ENCODE measurements at regions of chr2 and their contacts with region 1.

Region 1: GRCh38 chr2:10434886-10435819 is 13.0 kb downstream of the ODC1 start:
- DNase-seq: peak in 1 of 2 experiments; percentile 93
- H3K4me3 ChIP-seq: no peak overlapping the region
- H3K27ac ChIP-seq: no peak overlapping the region
- H3K4me1 ChIP-seq: peaks cover 0 to 3% (median 1%) of the 10 kb centered on the region in 4 experiments; a peak in 3 of 7 replicates
- H3K27me3 ChIP-seq: peaks cover 0 to 8% (median 3%) of the 10 kb centered on the region in 4 experiments; a peak in 3 of 7 replicates
- CTCF ChIP-seq: peak in 2 of 3 experiments; percentile 88 to 96; a peak in 3 of 4 replicates
- EP300 ChIP-seq: no peak
- POLR2A ChIP-seq: no peak
- RAD21 ChIP-seq: peak; percentile 99

Region 2: GRCh38 chr2:10122386-10123280 is 312.5 kb before region 1 on chr2 and contains the start of gene RRM2:
- CTCF ChIA-PET with region 1: interaction called, 26 read pairs
- POLR2A ChIA-PET with region 1: interaction called, 8 read pairs
- DNase-seq: peak; percentile 71 to 96
- H3K4me3 ChIP-seq: peak within 1 kb of the TSS; percentile 85 to 96 (median 88)
- H3K27ac ChIP-seq: peak within 1 kb of the TSS; percentile 85
- H3K4me1 ChIP-seq: peaks cover 1 to 4% (median 4%) of the 10 kb centered on the region in 4 experiments; a peak in 5 of 7 replicates
- H3K27me3 ChIP-seq: no peaks in the 10 kb centered on the region
- CTCF ChIP-seq: no peak
- EP300 ChIP-seq: no peak
- POLR2A ChIP-seq: peak; percentile 97 to 98
- RAD21 ChIP-seq: no peak
- total RNA-seq, gene RRM2: 215 and 228 TPM in 2 replicates

Region 3: DNA sequence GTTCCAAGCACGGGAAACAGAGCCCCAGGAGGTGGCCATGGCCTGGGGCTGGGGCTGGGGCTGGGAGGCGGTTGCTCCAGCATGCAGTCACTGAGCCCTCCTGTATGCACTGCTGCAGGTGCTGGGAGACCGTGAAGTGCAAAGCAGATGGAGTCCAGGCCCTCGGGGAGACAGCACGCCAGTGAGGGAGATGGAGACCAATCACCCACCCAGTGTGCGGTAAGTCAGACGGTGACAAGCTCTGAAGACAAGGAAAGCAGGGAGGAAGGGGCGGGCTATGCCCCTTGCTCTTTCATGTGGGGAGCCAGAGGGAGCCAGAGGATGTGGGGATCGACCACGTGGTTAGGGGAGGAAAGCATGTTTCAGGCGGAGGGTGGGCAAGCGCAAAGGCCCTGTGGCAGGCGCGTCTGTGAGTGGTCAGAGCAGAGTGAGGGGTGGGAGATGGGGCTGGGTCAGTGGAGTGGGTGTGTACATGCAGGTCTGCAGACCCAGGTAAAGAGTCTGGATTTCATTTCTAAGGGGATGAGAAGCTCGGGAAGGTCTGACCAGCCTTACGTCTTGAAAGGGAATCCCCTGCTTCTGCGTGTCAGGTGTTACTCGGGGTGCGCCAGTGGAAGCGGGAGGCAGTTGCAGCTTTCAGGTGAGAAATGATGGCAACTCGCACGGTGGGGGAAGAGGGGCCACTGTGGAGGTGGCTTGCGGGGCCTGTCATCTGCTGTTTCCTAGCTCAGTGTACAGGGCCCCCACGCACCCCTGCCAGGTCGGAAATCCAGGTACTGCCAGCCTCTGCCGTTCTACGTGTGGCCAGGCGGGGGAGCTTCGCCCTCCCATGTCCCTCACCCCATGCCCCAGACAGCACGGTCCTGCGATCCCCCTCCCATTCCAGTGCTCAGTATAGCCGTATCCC is 293.2 kb before region 1 on chr2:
- CTCF ChIA-PET with region 1: interaction called, 44 read pairs
- POLR2A ChIA-PET with region 1: interaction called, 5 read pairs
- DNase-seq: peak in 1 of 2 experiments; percentile 77
- H3K4me3 ChIP-seq: no peak overlapping the region
- H3K27ac ChIP-seq: no peak overlapping the region
- H3K4me1 ChIP-seq: peaks cover 0 to 3% (median 0%) of the 10 kb centered on the region in 4 experiments; a peak in 1 of 7 replicates
- H3K27me3 ChIP-seq: 0 out of 7 replicates have a peak, but pooled peaks cover 0 to 3% (median 0%) of the 10 kb centered on the region in 4 experiments
- CTCF ChIP-seq: peak; percentile 64 to 80 (median 78)
- EP300 ChIP-seq: no peak
- POLR2A ChIP-seq: no peak
- RAD21 ChIP-seq: peak; percentile 64 to 65

Region 4: DNA sequence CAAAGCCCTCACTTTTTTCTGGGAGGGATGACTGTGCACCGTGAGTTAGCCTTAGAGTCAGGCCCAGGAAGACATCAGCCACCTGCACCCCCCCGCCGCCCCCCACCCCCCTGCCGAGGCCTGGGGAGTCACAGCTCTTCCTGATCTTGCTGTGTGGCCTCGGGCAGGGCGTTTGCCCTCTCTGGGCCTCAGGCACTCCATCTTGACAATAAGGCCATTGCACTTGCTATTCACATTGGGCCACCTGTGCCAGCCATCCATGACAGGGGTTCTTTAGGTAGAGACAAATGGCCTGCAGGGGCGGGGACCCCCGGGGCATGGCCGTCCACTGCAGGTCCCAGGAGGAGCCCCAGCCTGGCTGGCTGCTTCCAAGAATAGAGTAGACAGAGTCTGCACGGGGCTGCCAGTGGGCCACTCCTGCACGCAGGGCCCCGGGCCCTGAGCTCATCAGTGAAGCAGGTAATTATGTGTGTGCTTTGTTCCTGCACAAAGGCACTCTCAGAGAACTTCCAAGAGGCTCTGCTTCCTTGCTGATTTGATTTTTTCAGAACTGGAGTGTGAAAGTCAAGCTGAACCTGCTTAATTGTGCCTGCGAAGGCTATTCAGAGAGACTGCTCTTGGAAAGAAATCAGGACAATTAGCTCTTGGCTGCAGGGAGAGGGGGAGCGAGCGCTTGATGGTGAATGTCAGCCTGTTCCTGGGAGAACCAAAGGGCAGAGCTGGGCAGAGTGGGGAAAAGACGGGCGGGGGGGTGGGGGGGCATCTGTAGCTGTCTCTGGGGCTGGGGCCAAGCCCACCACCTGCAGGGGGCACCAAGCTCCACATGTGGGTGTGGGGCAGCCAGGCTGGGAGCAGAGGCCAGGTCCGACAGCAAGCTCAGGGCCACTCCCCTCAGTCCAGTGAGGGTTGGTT is 272.3 kb before region 1 on chr2:
- CTCF ChIA-PET with region 1: interaction called, 14 read pairs
- POLR2A ChIA-PET with region 1: interaction called, 3 read pairs
- DNase-seq: no peak
- H3K4me3 ChIP-seq: no peak overlapping the region
- H3K27ac ChIP-seq: no peak overlapping the region
- H3K4me1 ChIP-seq: peaks cover 0 to 7% (median 0%) of the 10 kb centered on the region in 4 experiments; a peak in 1 of 7 replicates
- H3K27me3 ChIP-seq: no peaks in the 10 kb centered on the region
- CTCF ChIP-seq: peak; percentile 19 to 55 (median 36)
- EP300 ChIP-seq: no peak
- POLR2A ChIP-seq: no peak
- RAD21 ChIP-seq: peak; percentile 39 to 44; a peak in 3 of 4 replicates

Region 5: GRCh38 chr2:10254373-10255151 is 180.6 kb before region 1 on chr2:
- CTCF ChIA-PET with region 1: interaction called, 19 read pairs
- POLR2A ChIA-PET with region 1: interaction called, 3 read pairs
- DNase-seq: no peak
- H3K4me3 ChIP-seq: no peak overlapping the region
- H3K27ac ChIP-seq: no peak overlapping the region
- H3K4me1 ChIP-seq: no peaks in the 10 kb centered on the region
- H3K27me3 ChIP-seq: no peaks in the 10 kb centered on the region
- CTCF ChIP-seq: no peak
- EP300 ChIP-seq: no peak
- POLR2A ChIP-seq: no peak
- RAD21 ChIP-seq: no peak

Region 6: DNA sequence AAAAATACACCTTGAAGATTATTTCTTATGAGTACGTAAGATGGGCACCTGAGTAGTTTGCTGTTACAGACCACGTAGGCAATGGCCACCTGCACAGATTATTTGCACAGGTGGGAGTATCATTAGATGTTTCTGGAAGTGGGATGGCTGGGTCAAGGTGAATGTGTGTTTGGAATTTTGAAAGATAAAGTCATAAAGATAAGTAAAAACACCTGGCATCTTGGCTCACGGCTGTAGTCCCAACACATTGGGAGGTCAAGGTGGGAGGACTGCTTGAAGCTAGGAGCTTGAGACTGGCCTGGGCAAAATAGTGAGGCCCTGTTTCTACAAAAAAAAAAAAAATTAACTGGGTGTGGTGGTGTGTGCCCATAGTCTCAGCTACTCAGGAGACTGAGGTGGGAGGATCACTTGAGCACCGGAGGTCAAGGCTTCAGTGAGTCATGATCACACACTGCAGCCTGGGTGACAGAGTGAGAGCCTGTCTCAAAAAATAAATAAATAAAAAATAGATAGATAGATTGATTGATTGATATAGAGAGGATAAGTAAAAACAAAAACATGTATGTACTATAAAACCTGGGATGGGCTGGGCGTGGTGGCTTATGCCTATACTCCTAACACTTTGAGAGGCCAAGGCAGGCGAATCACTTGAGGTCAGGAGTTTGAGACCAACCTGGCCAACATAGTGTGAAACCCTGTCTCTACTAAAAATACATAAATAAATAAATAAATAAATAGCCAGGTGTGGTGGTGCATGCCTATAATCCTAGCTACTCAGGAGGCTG is 17.4 kb before region 1 on chr2:
- CTCF ChIA-PET with region 1: interaction called, 16 read pairs
- POLR2A ChIA-PET with region 1: interaction called, 5 read pairs
- DNase-seq: no peak
- H3K4me3 ChIP-seq: no peak overlapping the region
- H3K27ac ChIP-seq: no peak overlapping the region
- H3K4me1 ChIP-seq: no peaks in the 10 kb centered on the region; a peak in 1 of 7 replicates
- H3K27me3 ChIP-seq: no peaks in the 10 kb centered on the region
- CTCF ChIP-seq: no peak
- EP300 ChIP-seq: no peak
- POLR2A ChIP-seq: no peak
- RAD21 ChIP-seq: no peak

Region 7: GRCh38 chr2:10448208-10448645 is 13.1 kb after region 1 on chr2 and contains the start of gene ODC1:
- CTCF ChIA-PET with region 1: interaction called, 25 read pairs
- POLR2A ChIA-PET with region 1: interaction called, 44 read pairs
- DNase-seq: no peak
- H3K4me3 ChIP-seq: peak within 1 kb of the TSS; percentile 46 to 76 (median 49)
- H3K27ac ChIP-seq: peak within 1 kb of the TSS; percentile 55; the same call in 1 of the 2 replicates
- H3K4me1 ChIP-seq: peaks cover 2 to 10% (median 4%) of the 10 kb centered on the region in 4 experiments; a peak in 6 of 7 replicates
- H3K27me3 ChIP-seq: peaks cover 0 to 28% (median 12%) of the 10 kb centered on the region in 4 experiments; a peak in 5 of 7 replicates
- CTCF ChIP-seq: no peak
- EP300 ChIP-seq: no peak
- POLR2A ChIP-seq: peak; percentile 7 to 33; a peak in 1 of 3 replicates
- RAD21 ChIP-seq: no peak
- total RNA-seq, gene ODC1: 73.6 and 76.7 TPM in 2 replicates